Posterior vena cava (tissue), 2 donors: ENCODE measurements at regions of chr9 and their contacts with region 1.

Region 1: DNA sequence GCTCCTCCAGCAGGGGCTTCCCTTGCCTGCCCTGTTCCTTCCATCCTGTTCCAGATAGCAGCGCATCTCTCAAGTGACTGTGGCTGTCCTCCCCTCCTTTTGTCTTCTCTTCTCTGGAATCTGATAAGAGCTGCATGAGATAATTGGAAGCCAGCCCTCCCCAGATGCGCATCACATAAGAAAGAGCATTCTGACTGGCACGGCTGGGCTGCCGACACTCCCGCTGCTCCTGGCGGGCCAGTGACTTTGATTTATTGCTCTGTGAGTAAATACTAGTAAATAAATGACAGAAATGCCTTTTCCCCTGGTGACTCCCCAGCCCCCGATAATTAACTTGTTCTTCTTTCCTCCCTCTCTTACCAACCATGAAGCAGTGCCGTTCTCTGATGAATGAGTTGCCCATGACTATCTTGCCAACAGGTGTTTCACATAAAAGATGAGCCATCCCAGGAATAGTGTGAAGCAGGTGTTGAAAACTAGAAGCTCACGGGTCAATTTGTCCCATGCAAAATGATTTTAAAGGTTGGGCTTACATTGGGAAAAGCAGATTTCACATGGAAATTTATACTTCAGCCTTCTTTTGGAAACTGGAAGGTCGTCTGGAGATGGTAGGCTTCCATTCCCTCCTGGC is 212.3 kb downstream of the ERCC6L2 start:
- DNase-seq: no peak

Region 2: GRCh38 chr9:95981761-95982390 is 105.9 kb before region 1 on chr9:
- intact Hi-C with region 1: no loop called
- DNase-seq: no peak

Region 3: GRCh38 chr9:96057155-96057554 is 30.6 kb before region 1 on chr9:
- intact Hi-C with region 1: no loop called
- DNase-seq: peak; percentile 36

Region 4: DNA sequence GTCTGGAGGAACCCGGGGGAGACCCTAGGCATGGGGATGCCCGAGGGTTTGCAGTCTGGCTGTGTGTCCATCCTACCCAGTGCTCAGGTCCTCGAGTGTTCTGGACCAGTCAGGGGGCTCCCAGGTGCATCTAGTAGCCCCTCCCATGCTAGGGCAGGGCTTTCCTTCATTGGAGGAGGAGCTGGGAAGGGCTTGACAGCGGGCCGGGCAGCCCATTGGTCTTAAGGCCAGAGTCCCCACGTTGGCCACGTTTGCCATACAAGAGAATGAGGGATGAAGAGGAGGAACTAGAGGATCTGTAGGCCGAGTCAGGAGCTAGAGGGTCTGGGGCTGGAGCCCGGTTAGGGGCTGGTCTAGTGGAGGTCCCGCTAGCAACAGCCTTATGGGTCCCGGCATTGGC is 988.5 kb after region 1 on chr9:
- intact Hi-C with region 1: loop called in 1 of 2 experiments (anchors 5 kb)
- DNase-seq: no peak

Region 5: GRCh38 chr9:97747201-97747965 is 1659.6 kb after region 1 on chr9:
- intact Hi-C with region 1: no loop called
- DNase-seq: no peak